B cell (primary cell): ENCODE measurements at regions of chr12 and their contacts with region 1.

Region 1: DNA sequence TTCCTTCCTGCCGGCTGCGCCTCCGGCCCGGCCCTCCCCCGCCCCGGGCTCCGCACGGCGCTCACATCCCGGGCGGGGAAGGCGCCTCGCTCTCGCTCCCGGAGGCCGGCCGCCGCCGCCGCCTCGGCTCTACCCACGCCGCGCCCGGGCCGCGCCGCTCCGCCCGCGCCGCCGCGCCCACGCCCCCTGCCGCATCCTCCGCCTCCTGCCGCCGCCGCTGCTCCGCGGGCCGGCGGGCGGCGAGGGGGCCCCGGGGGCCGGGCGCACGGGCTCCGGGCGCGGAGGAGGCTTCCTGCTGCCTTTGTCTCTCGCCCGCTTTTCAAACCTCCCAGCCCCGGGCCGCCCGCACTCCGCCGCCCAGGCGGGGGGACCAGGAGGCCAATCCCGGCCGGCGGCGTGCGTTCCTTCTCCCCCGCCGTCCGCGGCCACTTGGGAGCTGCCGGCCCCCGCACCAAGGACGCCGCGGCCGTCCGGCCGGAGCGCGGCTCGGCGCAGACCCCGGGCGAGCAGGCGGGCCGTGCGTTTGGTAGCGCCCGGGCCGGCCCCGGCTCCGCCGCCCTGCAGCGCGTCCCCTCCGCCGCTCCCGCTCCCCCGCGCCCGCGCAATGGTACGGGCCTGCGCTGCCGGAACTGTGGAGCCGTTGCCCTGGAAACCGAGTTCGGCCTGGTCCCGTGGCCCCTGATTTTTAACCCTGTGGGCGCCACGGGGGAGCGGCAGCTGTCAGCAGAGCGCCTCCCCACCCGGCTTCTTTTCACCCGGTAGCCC is at the start of gene FBXL14:
- DNase-seq: peak; percentile 95
- ATAC-seq: peak; percentile 65
- H3K4me3 ChIP-seq: peak within 1 kb of the TSS; percentile 59 to 81 (median 73)
- H3K4me3 Mint-ChIP-seq: peak within 1 kb of the TSS; percentile 94
- H3K27ac ChIP-seq: peak within 1 kb of the TSS; percentile 80 to 96
- H3K27ac Mint-ChIP-seq: peak within 1 kb of the TSS; percentile 97
- H3K4me1 ChIP-seq: peaks cover 38 to 41% of the 10 kb centered on the region in 2 donors
- H3K4me1 Mint-ChIP-seq: peaks cover 50% of the 10 kb centered on the region
- H3K27me3 ChIP-seq: no peaks in the 10 kb centered on the region
- H3K27me3 Mint-ChIP-seq: no peaks in the 10 kb centered on the region
- CTCF ChIP-seq: no peak
- total RNA-seq, gene FBXL14: 33.9 and 37.3 TPM in 2 replicates

Region 2: GRCh38 chr12:389139-390096 is 1205.0 kb before region 1 on chr12 and contains the start of gene KDM5A:
- CTCF ChIA-PET with region 1: no interaction called
- POLR2A ChIA-PET with region 1: interaction called, 3 read pairs
- intact Hi-C with region 1: loop called (anchors 5 kb)
- DNase-seq: peak; percentile 98
- ATAC-seq: peak; percentile 93
- H3K4me3 ChIP-seq: peak within 1 kb of the TSS; percentile 81 to 99 (median 98)
- H3K4me3 Mint-ChIP-seq: peak within 1 kb of the TSS; percentile 98
- H3K27ac ChIP-seq: peak within 1 kb of the TSS; percentile 90 to 93
- H3K27ac Mint-ChIP-seq: peak within 1 kb of the TSS; percentile 99
- H3K4me1 ChIP-seq: peaks cover 27 to 28% of the 10 kb centered on the region in 2 donors
- H3K4me1 Mint-ChIP-seq: peaks cover 40% of the 10 kb centered on the region
- H3K27me3 ChIP-seq: no peaks in the 10 kb centered on the region
- H3K27me3 Mint-ChIP-seq: no peaks in the 10 kb centered on the region
- CTCF ChIP-seq: no peak
- total RNA-seq, gene KDM5A: 171 and 175 TPM in 2 replicates

Region 3: DNA sequence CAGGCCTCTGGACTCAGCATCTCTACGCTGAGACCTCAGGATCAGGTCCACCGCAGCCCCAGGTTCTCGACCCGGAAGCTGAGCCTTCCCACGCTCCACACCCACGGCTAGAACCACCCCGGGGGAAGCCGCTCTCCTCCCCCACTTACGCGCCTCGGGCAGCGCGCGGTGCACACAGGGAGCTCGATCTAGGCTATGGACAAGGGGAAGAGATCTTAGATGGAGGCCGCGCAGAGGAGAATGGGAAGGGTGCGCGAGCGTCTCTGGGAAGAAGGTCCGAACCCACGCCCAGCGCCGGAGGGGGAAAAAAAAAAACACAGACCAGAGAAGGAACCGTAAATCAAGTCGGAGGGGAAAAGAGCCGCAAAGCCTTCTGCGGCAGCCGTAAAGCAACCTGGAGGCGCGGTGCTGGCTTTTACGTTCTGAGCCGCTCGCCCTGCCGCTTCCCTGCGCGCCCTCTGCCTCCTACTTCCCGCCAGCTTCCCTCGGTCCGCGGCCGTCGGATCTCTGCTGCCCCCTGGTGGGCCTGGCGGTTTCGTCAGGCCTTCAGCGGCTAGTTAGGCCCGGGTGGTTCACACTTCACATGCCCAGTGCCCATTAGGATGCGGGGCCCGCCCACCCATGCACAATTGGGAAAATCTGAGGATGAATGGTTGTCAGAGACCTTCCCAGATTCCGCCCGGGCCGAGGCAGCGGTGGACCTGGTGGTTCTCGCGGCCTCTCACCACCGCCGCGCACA is 644.8 kb before region 1 on chr12 and contains the start of gene RAD52:
- CTCF ChIA-PET with region 1: no interaction called
- POLR2A ChIA-PET with region 1: no interaction called
- intact Hi-C with region 1: loop called (anchors 1 kb)
- DNase-seq: peak; percentile 99
- ATAC-seq: peak; percentile 86
- H3K4me3 ChIP-seq: peak within 1 kb of the TSS; percentile 67 to 91 (median 74)
- H3K4me3 Mint-ChIP-seq: peak within 1 kb of the TSS; percentile 88
- H3K27ac ChIP-seq: peak within 1 kb of the TSS; percentile 82 to 84
- H3K27ac Mint-ChIP-seq: peak within 1 kb of the TSS; percentile 90
- H3K4me1 ChIP-seq: peaks cover 0 to 13% of the 10 kb centered on the region in 2 donors
- H3K4me1 Mint-ChIP-seq: peaks cover 27% of the 10 kb centered on the region
- H3K27me3 ChIP-seq: no peaks in the 10 kb centered on the region
- H3K27me3 Mint-ChIP-seq: no peaks in the 10 kb centered on the region
- CTCF ChIP-seq: peak; percentile 99
- total RNA-seq, gene RAD52: 22.9 and 27.6 TPM in 2 replicates

Region 4: GRCh38 chr12:1533602-1534304 is 60.7 kb before region 1 on chr12:
- CTCF ChIA-PET with region 1: no interaction called
- POLR2A ChIA-PET with region 1: no interaction called
- intact Hi-C with region 1: loop called (anchors 5 kb)
- DNase-seq: peak; percentile 32
- ATAC-seq: peak; percentile 19
- H3K4me3 ChIP-seq: peak overlapping the region in 3 of 5 experiments; percentile 30 to 48 (median 47)
- H3K4me3 Mint-ChIP-seq: peak overlapping the region; percentile 84
- H3K27ac ChIP-seq: no peak overlapping the region
- H3K27ac Mint-ChIP-seq: no peak overlapping the region
- H3K4me1 ChIP-seq: peaks cover 35 to 37% of the 10 kb centered on the region in 2 donors
- H3K4me1 Mint-ChIP-seq: peaks cover 30% of the 10 kb centered on the region
- H3K27me3 ChIP-seq: peaks cover 0 to 49% (median 23%) of the 10 kb centered on the region in 4 experiments
- H3K27me3 Mint-ChIP-seq: peaks cover 52% of the 10 kb centered on the region
- CTCF ChIP-seq: no peak

Region 5: GRCh38 chr12:1573960-1574864 is 20.2 kb before region 1 on chr12:
- CTCF ChIA-PET with region 1: no interaction called
- POLR2A ChIA-PET with region 1: no interaction called
- intact Hi-C with region 1: no loop called
- DNase-seq: no peak
- ATAC-seq: no peak
- H3K4me3 ChIP-seq: no peak overlapping the region
- H3K4me3 Mint-ChIP-seq: no peak overlapping the region
- H3K27ac ChIP-seq: no peak overlapping the region
- H3K27ac Mint-ChIP-seq: no peak overlapping the region
- H3K4me1 ChIP-seq: no peaks in the 10 kb centered on the region
- H3K4me1 Mint-ChIP-seq: peaks cover 2% of the 10 kb centered on the region
- H3K27me3 ChIP-seq: no peaks in the 10 kb centered on the region
- H3K27me3 Mint-ChIP-seq: no peaks in the 10 kb centered on the region
- CTCF ChIP-seq: no peak

Region 6: GRCh38 chr12:1605129-1606020 is 10.9 kb after region 1 on chr12:
- CTCF ChIA-PET with region 1: interaction called, 31 read pairs
- POLR2A ChIA-PET with region 1: interaction called, 3 read pairs
- intact Hi-C with region 1: no loop called
- DNase-seq: peak; percentile 83
- ATAC-seq: peak; percentile 61
- H3K4me3 ChIP-seq: peak overlapping the region; percentile 37 to 63 (median 44)
- H3K4me3 Mint-ChIP-seq: peak overlapping the region; percentile 97
- H3K27ac ChIP-seq: no peak overlapping the region
- H3K27ac Mint-ChIP-seq: peak overlapping the region; percentile 66
- H3K4me1 ChIP-seq: peaks cover 11 to 27% of the 10 kb centered on the region in 2 donors
- H3K4me1 Mint-ChIP-seq: peaks cover 29% of the 10 kb centered on the region
- H3K27me3 ChIP-seq: no peaks in the 10 kb centered on the region
- H3K27me3 Mint-ChIP-seq: peaks cover 3% of the 10 kb centered on the region
- CTCF ChIP-seq: peak; percentile 72